ENCODE measurements at regions of chr15 and their contacts with region 1.

Region 1: DNA sequence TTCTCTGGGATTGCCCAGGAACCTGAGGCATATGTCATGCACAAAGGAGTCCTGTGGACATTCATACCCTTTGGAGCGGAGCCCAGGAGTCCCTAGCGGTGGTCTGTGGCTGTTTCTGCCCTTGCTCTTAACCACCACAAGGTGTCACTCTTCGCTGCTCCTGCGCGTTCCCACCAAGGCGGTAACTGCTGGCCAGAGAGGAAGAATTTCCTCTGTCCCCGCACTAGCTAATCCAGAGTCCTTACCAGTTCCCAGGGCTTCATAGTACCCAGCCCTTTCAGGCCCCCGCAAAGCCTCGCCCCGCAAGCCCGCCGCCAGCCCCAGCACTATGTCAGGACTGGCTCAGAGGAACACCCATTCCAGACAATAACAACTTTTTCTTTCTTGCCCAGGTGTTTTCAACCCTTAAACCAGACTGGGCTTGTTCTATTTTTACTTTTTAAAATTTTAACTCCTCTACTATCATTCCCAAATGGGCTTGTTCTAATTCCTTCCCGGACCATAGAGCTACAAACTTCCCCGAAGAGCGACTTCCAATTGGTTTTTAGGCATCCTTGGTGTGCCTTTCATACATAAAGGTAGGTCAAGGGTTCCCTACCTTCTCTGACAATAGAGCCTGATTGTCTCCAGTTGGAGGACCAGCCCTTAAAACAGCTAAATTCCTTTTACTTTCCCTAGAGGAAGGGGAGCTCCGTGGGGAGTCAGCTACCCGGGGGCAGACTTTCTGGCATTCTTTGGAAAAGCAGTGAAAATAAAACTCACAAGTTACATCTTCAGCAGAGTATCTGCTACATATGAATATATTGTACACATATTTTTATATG is 31.8 kb upstream of the ZNF774 start:
- DNase-seq: peak; percentile 77
- ATAC-seq: peak; percentile 99
- H3K4me3 Mint-ChIP-seq: no peak overlapping the region
- H3K27ac Mint-ChIP-seq: no peak overlapping the region
- H3K4me1 Mint-ChIP-seq: peaks cover 2% of the 10 kb centered on the region
- H3K27me3 Mint-ChIP-seq: no peaks in the 10 kb centered on the region
- CTCF ChIP-seq: peak; percentile 97

Region 2: GRCh38 chr15:90286678-90287077 is 33.6 kb before region 1 on chr15:
- CTCF ChIA-PET with region 1: interaction called, 10 read pairs
- POLR2A ChIA-PET with region 1: no interaction called
- intact Hi-C with region 1: no loop called
- DNase-seq: peak; percentile 59
- ATAC-seq: peak; percentile 82
- H3K4me3 Mint-ChIP-seq: no peak overlapping the region
- H3K27ac Mint-ChIP-seq: no peak overlapping the region
- H3K4me1 Mint-ChIP-seq: no peaks in the 10 kb centered on the region
- H3K27me3 Mint-ChIP-seq: no peaks in the 10 kb centered on the region
- CTCF ChIP-seq: peak; percentile 61

Region 3: GRCh38 chr15:90336705-90337141 is 16.4 kb after region 1 on chr15:
- CTCF ChIA-PET with region 1: interaction called, 13 read pairs
- POLR2A ChIA-PET with region 1: no interaction called
- intact Hi-C with region 1: no loop called
- DNase-seq: peak; percentile 16
- ATAC-seq: peak; percentile 58
- H3K4me3 Mint-ChIP-seq: no peak overlapping the region
- H3K27ac Mint-ChIP-seq: no peak overlapping the region
- H3K4me1 Mint-ChIP-seq: peaks cover 8% of the 10 kb centered on the region
- H3K27me3 Mint-ChIP-seq: no peaks in the 10 kb centered on the region
- CTCF ChIP-seq: no peak

Region 4: GRCh38 chr15:90400406-90401314 is 80.4 kb after region 1 on chr15:
- CTCF ChIA-PET with region 1: interaction called, 13 read pairs
- POLR2A ChIA-PET with region 1: no interaction called
- intact Hi-C with region 1: no loop called
- DNase-seq: peak; percentile 73
- ATAC-seq: peak; percentile 98
- H3K4me3 Mint-ChIP-seq: peak overlapping the region; percentile 44
- H3K27ac Mint-ChIP-seq: peak overlapping the region; percentile 95
- H3K4me1 Mint-ChIP-seq: peaks cover 60% of the 10 kb centered on the region
- H3K27me3 Mint-ChIP-seq: no peaks in the 10 kb centered on the region
- CTCF ChIP-seq: no peak

Region 5: GRCh38 chr15:90463381-90463780 is 143.1 kb after region 1 on chr15:
- CTCF ChIA-PET with region 1: interaction called, 58 read pairs
- POLR2A ChIA-PET with region 1: no interaction called
- intact Hi-C with region 1: no loop called
- DNase-seq: no peak
- ATAC-seq: no peak
- H3K4me3 Mint-ChIP-seq: no peak overlapping the region
- H3K27ac Mint-ChIP-seq: no peak overlapping the region
- H3K4me1 Mint-ChIP-seq: peaks cover 17% of the 10 kb centered on the region
- H3K27me3 Mint-ChIP-seq: no peaks in the 10 kb centered on the region
- CTCF ChIP-seq: no peak

Region 6: DNA sequence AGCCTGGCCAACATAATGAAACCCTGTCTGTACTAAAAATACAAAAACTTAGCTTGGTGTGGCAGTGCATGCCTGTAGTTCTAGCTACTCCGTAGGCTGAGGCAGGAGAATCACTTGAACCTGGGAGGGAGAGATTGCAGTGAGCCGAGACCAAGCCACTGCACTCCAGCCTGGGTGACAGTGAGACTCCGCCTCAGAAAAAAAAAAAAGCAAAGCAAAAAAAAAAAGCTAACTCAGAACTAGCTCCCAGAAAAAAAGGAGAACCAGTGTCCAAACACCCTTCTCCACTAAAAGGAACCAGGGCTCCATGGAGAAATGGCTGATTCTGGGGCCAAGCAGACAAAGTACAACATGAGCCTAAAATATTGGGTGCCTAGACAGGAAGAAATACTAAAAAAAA is 192.7 kb after region 1 on chr15:
- CTCF ChIA-PET with region 1: interaction called, 16 read pairs
- POLR2A ChIA-PET with region 1: no interaction called
- intact Hi-C with region 1: no loop called
- DNase-seq: no peak
- ATAC-seq: no peak
- H3K4me3 Mint-ChIP-seq: no peak overlapping the region
- H3K27ac Mint-ChIP-seq: no peak overlapping the region
- H3K4me1 Mint-ChIP-seq: peaks cover 11% of the 10 kb centered on the region
- H3K27me3 Mint-ChIP-seq: no peaks in the 10 kb centered on the region
- CTCF ChIP-seq: no peak

Region 7: DNA sequence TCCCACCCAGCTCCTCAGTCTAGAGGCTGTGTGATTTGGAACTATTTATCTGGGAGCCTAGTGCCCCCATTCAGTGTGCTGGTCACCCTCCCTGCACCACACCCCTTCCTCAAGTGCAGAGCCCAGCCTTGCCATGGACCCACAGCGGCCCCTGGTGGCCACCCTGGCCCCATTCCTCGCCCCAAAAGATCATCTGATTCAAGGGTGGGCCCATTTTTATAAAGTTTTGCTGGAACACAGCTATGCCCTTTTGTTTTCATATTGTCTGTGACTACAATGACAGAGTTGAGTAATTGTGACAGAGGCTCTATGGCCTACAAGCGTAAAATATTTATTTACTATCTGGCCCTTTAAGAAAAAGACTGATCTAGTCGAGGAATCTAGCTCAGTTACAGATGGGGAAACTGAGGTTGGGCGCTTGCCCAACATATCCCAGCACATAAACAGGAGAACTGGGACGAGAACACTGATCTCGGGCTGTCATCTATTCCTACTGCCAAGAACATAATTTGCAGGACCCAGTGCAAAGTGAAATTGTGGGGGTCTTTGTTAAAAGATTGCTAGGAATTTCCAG is 565.9 kb after region 1 on chr15:
- CTCF ChIA-PET with region 1: interaction called, 19 read pairs
- POLR2A ChIA-PET with region 1: interaction called, 3 read pairs
- intact Hi-C with region 1: no loop called
- DNase-seq: peak; percentile 85
- ATAC-seq: peak; percentile 69
- H3K4me3 Mint-ChIP-seq: no peak overlapping the region
- H3K27ac Mint-ChIP-seq: peak overlapping the region; percentile 55
- H3K4me1 Mint-ChIP-seq: peaks cover 7% of the 10 kb centered on the region
- H3K27me3 Mint-ChIP-seq: peaks cover 7% of the 10 kb centered on the region
- CTCF ChIP-seq: peak; percentile 99